ENCODE measurements at regions of chrX and their contacts with region 1.

Region 1: DNA sequence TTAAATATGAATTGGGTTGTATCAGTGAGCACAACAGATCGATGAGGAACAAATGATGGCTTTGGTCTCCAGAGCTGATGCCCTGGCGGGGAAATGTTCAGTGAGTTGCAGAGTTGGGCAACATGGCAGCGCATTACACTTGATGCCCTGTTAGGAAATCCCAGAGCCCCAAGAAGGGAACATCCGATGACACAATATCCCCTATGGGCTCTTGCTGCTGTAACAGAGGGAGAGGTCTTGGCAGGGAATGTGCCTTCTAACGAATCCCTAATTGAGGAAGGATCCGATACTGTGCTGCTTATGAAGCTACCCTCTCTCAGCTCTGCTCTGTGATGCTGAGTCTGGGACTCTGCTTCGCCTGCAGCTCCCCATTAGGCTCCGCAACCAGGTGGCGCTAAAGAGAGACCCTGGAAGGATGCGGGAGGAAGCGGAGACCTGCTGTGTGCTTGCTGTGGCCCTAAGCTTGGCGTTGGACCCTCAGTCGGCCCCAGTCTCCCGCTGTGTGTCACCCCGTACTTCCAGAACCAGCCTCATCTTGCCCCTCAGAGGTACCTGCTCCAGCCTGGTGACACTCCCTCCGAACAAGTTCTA is 38.9 kb downstream of the PDHA1 start:
- DNase-seq: peak; percentile 23 to 38
- ATAC-seq: peak in 4 of 8 donors; percentile 55 to 68 (median 64)
- H3K4me3 ChIP-seq: no peak overlapping the region
- H3K27ac ChIP-seq: no peak overlapping the region
- H3K4me1 ChIP-seq: no peaks in the 10 kb centered on the region
- H3K27me3 ChIP-seq: peaks cover 0 to 23% (median 0%) of the 10 kb centered on the region in 7 donors
- CTCF ChIP-seq: peak in 7 of 9 donors; percentile 44 to 59 (median 49)

Region 2: DNA sequence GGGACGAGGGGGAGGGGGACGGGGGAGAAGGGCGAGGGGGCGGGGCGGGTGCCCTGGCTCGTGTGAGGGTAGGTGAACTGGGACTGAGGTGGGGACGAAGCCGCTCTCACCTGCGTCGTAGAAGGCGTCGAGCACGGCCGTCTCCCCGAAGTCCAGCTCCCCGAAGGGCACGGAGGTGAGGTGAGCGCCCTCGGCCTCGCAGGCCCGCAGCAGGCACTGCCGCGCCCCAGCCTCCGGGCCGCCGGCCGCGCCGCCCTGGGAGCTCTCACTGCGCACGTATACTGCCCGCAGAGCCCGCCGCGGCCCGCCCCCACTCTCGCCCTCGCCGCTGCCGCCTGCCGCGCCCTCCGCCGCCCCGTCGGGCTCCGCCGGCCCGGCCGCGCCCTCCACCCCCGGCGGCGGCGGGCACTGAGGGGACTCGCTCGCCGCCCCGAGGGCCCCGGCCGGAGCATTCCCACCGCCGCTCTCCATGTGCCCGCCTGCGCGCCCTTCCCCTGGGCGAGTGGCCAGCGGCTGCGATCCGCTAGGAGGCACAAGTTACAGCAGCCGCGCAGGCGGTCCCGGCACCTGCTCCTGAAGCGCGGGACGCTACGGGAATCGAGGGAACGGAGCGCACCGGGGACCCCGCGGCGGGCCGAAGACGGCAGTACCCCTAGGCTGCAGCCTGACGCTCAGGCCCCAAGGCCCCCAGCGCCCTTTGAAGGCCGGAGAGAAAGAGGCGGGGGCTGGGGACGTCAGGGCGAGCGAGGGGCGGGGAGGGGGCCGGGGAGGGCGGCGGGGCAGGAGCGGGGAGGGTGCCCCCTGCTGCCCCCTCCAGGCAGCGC is 132.4 kb after region 1 on chrX and contains the start of gene MAP3K15:
- intact Hi-C with region 1: loop called in 1 of 10 experiments (anchors 10 kb)
- DNase-seq: peak in 1 of 2 donors; percentile 23
- ATAC-seq: peak in 1 of 8 donors; percentile 59
- H3K4me3 ChIP-seq: peak within 1 kb of the TSS in 7 of 10 donors; percentile 22 to 41 (median 32)
- H3K27ac ChIP-seq: no peak within 1 kb of the TSS
- H3K4me1 ChIP-seq: peaks cover 0 to 9% (median 0%) of the 10 kb centered on the region in 9 donors
- H3K27me3 ChIP-seq: peaks cover 0 to 48% (median 7%) of the 10 kb centered on the region in 7 donors
- CTCF ChIP-seq: peak in 2 of 9 donors; percentile 32 to 43
- total RNA-seq, gene MAP3K15: 0.13 TPM in 1 of 10 donors, not detected in the others

Region 3: DNA sequence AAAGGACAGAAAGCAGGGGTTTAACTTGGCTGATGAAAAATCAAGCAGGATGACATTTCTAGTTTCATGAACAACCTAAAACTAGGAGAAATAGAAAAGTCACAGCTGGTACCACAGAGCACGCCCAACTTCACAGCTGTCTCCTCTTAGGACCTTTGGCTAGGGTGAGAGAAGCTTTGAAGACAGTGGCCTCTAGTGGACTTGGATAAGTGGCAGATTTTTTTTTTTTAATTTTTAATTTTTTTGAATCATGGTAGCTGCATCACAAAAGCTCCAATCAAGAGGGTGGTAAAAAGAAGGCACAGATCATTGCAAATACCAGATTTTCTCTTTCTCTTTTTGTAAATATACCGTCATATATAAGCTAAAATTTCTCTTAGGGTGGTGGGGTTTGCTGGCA is 152.8 kb after region 1 on chrX:
- intact Hi-C with region 1: loop called in 6 of 10 experiments (anchors 2 to 10 kb)
- DNase-seq: no peak
- ATAC-seq: peak in 1 of 8 donors; percentile 51
- H3K4me3 ChIP-seq: no peak overlapping the region
- H3K27ac ChIP-seq: no peak overlapping the region
- H3K4me1 ChIP-seq: no peaks in the 10 kb centered on the region
- H3K27me3 ChIP-seq: peaks cover 0 to 7% (median 0%) of the 10 kb centered on the region in 7 donors
- CTCF ChIP-seq: peak in 5 of 9 donors; percentile 21 to 43 (median 26)